Activated CD8-positive, alpha-beta T cell treated with anti-CD3 and anti-CD28 coated beads for 36 hours (primary cell): ENCODE measurements at regions of chr2 and their contacts with region 1.

Region 1: GRCh38 chr2:28493636-28494035 is 2.2 kb upstream of the PLB1 start:
- DNase-seq: no peak
- ATAC-seq: no peak
- H3K4me3 Mint-ChIP-seq: no peak overlapping the region
- H3K27ac Mint-ChIP-seq: no peak overlapping the region
- H3K4me1 Mint-ChIP-seq: no peaks in the 10 kb centered on the region
- H3K27me3 Mint-ChIP-seq: no peaks in the 10 kb centered on the region
- CTCF ChIP-seq: no peak

Region 2: DNA sequence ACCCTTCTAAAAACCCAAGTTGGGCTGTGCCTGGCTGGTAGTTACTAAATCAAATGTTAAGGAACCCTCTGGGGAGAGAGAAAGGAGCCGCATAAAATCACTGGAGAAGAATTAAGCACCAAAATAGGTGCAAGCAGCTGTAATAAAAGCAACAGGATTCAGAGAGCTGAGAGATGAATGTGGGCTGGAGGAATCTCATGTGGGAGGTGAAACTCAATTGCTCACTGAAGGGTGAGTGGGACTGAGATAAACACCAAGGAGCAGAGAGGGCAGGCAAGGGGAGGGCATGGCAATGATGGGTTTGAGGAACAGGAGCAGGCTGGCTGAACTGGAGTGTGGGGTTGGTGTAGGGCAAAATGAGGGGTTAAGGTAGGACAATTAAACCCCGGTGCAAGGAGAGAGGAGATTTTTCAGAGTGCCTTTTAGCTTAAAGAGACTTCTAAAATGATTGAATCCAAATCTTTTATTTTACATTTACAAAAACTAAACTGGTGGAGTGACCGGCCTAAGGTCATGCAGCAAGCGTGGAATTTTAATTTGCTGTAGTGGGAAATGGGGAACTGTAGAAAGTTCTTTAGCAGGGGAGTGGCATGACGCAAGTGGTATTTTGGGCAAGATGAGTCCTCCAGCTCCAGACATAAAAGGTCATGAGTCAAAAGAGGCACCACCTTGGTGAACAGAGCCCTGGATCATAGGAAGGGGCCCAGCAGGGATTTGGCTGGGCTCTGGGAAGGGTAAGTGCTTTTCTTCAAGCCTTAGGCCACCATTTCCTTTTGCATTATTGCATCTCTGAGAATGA is 12.7 kb after region 1 on chr2:
- CTCF ChIA-PET with region 1: interaction called, 4 read pairs
- POLR2A ChIA-PET with region 1: no interaction called
- intact Hi-C with region 1: loop called (anchors 1 kb)
- DNase-seq: peak; percentile 13
- ATAC-seq: no peak
- H3K4me3 Mint-ChIP-seq: no peak overlapping the region
- H3K27ac Mint-ChIP-seq: peak overlapping the region; percentile 1
- H3K4me1 Mint-ChIP-seq: peaks cover 18% of the 10 kb centered on the region
- H3K27me3 Mint-ChIP-seq: peaks cover 6% of the 10 kb centered on the region
- CTCF ChIP-seq: no peak